AG04449 (cell line): ENCODE measurements at regions of chr6 and their contacts with region 1.

Region 1: GRCh38 chr6:74735304-74735703 is 470.5 kb downstream of the COL12A1 start:
- DNase-seq: peak; percentile 90
- H3K4me3 ChIP-seq: no peak overlapping the region
- CTCF ChIP-seq: no peak

Region 2: GRCh38 chr6:74409447-74409846 is 325.9 kb before region 1 on chr6:
- CTCF ChIA-PET with region 1: interaction called, 10 read pairs
- POLR2A ChIA-PET with region 1: no interaction called
- DNase-seq: peak; percentile 42
- H3K4me3 ChIP-seq: no peak overlapping the region
- CTCF ChIP-seq: peak; percentile 37

Region 3: DNA sequence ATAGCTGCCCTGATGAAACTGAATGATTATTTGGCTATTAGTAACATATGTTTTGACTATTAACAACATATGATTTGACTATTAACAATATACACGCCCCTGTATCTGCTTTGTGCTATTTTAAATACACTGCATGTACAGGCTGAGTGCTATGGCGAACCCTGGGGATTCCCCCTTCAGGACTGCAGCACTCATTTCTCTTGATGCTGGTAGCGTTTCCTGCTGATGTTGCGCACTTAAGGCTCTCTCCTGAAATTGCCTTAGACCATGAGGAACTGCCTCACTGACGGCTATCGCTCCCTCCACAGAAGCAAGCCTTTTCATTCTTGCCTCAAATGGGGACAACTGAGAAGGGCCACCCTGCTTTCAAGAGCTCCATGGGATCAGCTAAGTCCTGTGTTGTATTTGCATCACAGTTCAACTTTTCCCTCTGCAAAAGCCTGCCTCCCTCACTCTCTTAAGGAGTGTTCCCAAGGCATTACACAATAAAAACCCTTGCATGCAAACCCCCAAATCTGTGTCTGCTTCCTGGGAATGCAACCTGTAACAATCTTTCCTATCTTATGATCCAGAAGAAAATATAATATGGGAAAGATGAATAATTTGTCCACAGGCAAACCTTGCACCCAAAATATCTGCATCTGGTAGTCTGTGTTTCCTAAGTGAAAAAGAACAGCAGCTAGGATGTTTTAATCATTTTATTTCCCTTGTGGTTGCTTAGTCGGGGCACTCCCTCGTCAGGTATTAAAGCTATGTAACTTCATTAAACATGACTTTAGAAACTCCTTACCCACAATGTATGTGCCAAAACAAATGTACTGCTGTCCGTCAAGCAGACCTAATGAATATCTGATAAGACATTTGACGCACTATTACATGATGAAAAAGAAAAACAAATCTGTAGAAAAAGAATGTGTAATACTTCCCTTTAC is 14.2 kb after region 1 on chr6:
- CTCF ChIA-PET with region 1: no interaction called
- POLR2A ChIA-PET with region 1: no interaction called
- DNase-seq: peak; percentile 52
- H3K4me3 ChIP-seq: no peak overlapping the region
- CTCF ChIP-seq: no peak